ENCODE measurements at regions of chr10 and their contacts with region 1.

Region 1: GRCh38 chr10:86349474-86349873 is 17.1 kb downstream of the GRID1 start:
- DNase-seq: peak; percentile 73
- ATAC-seq: peak; percentile 96
- H3K4me3 Mint-ChIP-seq: no peak overlapping the region
- H3K27ac Mint-ChIP-seq: no peak overlapping the region
- H3K4me1 Mint-ChIP-seq: no peaks in the 10 kb centered on the region; the same call in 1 of the 2 replicates
- H3K27me3 Mint-ChIP-seq: no peaks in the 10 kb centered on the region
- CTCF ChIP-seq: peak; percentile 46

Region 2: DNA sequence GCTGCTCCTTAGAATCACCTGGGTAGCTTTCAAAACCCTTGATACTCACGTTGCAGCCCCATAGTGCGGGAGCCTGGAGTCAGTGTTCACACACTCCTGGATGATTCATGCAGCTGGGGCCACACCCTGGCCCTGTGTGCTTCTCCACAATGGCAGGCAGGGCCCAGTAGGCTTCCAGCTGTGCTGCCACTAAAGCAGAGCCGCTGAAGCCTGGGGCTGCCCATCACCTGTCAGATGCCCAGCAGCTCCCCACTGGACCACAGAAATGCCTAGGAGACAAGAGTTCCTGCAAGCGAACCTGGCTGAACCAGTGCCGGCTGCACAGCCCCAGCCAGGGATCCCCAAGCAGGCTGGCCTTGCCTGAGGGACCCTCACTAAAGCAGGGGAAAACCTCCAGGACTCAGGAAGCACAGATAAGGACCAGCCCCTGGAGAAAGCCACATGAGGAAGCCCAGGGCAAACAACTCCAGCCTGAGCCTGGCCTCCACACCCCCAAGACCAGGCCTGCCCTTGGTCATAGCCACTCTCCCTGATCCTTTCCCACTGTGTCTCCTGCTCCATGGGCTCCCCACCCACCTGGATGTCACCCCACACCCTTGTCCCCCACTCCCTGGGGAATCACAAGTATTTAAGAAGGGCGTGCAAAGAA is 94.8 kb before region 1 on chr10:
- CTCF ChIA-PET with region 1: interaction called, 37 read pairs
- POLR2A ChIA-PET with region 1: no interaction called
- DNase-seq: no peak
- ATAC-seq: no peak
- H3K4me3 Mint-ChIP-seq: no peak overlapping the region
- H3K27ac Mint-ChIP-seq: no peak overlapping the region
- H3K4me1 Mint-ChIP-seq: peaks cover 15% of the 10 kb centered on the region
- H3K27me3 Mint-ChIP-seq: no peaks in the 10 kb centered on the region; the same call in 1 of the 2 replicates
- CTCF ChIP-seq: no peak

Region 3: DNA sequence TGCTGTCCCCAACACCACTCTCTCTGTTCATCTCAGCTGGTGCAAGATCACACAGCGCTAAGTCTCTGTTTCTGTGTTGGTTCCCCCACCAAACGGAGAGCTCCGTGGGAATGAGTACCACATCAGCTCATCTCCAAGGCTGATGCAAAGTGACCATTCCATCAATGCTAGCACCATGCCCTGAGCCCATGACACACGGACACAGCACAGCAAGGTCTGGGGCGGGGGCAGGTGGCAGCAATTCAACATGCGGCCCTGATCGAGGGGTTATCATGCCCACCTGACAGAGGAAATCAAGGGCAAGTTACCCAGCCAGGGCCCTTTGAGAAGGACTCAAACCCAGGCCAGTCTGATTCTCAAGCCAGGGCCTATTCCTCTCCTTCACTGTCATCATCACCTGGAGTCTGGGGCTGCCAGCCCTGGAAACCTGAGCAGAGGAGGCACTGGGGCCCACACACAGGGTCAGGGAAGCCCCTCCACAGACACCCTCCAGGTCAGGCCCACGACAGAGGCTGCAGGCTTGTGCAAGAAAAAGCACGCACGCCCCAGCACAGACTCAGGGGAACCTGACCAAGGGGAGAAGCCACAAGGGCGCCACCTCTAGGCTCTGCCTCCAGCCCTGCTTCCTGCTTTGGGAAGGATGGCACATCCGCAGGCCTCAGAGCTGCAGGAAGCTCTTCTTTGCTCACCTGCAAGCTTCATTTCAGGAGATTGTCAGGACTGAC is 57.7 kb before region 1 on chr10:
- CTCF ChIA-PET with region 1: interaction called, 15 read pairs
- POLR2A ChIA-PET with region 1: no interaction called
- DNase-seq: peak; percentile 57
- ATAC-seq: peak; percentile 82
- H3K4me3 Mint-ChIP-seq: no peak overlapping the region
- H3K27ac Mint-ChIP-seq: no peak overlapping the region
- H3K4me1 Mint-ChIP-seq: peaks cover 25% of the 10 kb centered on the region
- H3K27me3 Mint-ChIP-seq: peaks cover 3% of the 10 kb centered on the region; the same call in 1 of the 2 replicates
- CTCF ChIP-seq: no peak

Region 4: GRCh38 chr10:86366033-86366901 is 16.8 kb after region 1 on chr10 and contains the start of gene GRID1:
- CTCF ChIA-PET with region 1: interaction called, 98 read pairs
- POLR2A ChIA-PET with region 1: no interaction called
- DNase-seq: peak; percentile 58
- ATAC-seq: peak; percentile 2; the same call in 1 of the 2 replicates
- H3K4me3 Mint-ChIP-seq: peak within 1 kb of the TSS; percentile 59
- H3K27ac Mint-ChIP-seq: no peak within 1 kb of the TSS
- H3K4me1 Mint-ChIP-seq: peaks cover 18% of the 10 kb centered on the region
- H3K27me3 Mint-ChIP-seq: peaks cover 91% of the 10 kb centered on the region
- CTCF ChIP-seq: no peak
- total RNA-seq, gene GRID1: 0.21 to 0.50 TPM (median 0.37 TPM) in 3 replicates

Region 5: GRCh38 chr10:86399879-86400704 is 50.6 kb after region 1 on chr10:
- CTCF ChIA-PET with region 1: interaction called, 11 read pairs
- POLR2A ChIA-PET with region 1: no interaction called
- DNase-seq: peak; percentile 98
- ATAC-seq: peak; percentile 94
- H3K4me3 Mint-ChIP-seq: peak overlapping the region; percentile 71
- H3K27ac Mint-ChIP-seq: no peak overlapping the region
- H3K4me1 Mint-ChIP-seq: peaks cover 23% of the 10 kb centered on the region
- H3K27me3 Mint-ChIP-seq: peaks cover 70% of the 10 kb centered on the region
- CTCF ChIP-seq: peak; percentile 71

Region 6: DNA sequence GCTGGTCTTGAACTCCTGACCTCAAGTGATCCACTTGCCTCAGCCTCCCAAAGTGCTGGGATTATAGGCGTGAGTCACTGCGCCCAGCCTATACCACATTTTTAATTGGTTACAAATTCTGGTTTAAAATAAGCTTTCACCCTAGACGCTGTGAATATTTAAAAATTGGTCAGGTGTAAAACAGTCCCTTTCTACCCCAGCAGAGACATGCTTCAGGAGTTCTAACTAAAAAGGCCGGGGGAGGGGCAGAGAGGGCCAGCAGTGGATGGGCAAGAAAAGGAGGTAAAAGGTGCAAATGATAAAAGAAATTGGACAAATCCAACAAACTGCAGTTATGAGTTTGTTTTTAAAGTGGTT is 102.1 kb after region 1 on chr10:
- CTCF ChIA-PET with region 1: no interaction called
- POLR2A ChIA-PET with region 1: no interaction called
- DNase-seq: no peak
- ATAC-seq: no peak
- H3K4me3 Mint-ChIP-seq: no peak overlapping the region
- H3K27ac Mint-ChIP-seq: no peak overlapping the region
- H3K4me1 Mint-ChIP-seq: no peaks in the 10 kb centered on the region
- H3K27me3 Mint-ChIP-seq: no peaks in the 10 kb centered on the region
- CTCF ChIP-seq: no peak

Region 7: DNA sequence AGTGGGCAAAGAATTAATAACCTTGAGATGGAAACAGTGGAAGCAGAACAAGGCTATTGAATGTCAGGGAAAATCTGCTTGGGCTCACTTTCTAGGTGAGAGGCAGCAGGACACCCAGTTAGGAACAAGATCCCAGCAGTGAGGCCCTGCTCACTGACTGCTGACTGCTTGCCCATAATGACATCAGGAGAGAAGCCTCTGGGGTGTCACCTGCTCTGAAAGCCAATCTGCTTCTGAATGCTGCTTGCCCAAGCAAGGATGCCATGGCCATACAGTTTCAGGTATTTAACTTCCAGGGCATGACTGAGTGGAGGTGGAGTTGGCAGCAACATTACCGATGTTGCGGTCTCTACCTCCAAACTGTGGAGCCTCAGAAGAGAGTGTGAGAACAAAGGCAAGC is 183.9 kb after region 1 on chr10:
- CTCF ChIA-PET with region 1: no interaction called
- POLR2A ChIA-PET with region 1: no interaction called
- DNase-seq: no peak
- ATAC-seq: no peak
- H3K4me3 Mint-ChIP-seq: no peak overlapping the region
- H3K27ac Mint-ChIP-seq: no peak overlapping the region
- H3K4me1 Mint-ChIP-seq: peaks cover 22% of the 10 kb centered on the region
- H3K27me3 Mint-ChIP-seq: peaks cover 24% of the 10 kb centered on the region
- CTCF ChIP-seq: no peak

Measured in WTC11 (cell line).